ENCODE measurements at regions of chr16 and their contacts with region 1.

Region 1: GRCh38 chr16:51762081-51762996 is 611.3 kb upstream of the SALL1 start:
- DNase-seq: peak; percentile 70
- ATAC-seq: peak; percentile 97
- H3K4me3 ChIP-seq: no peak overlapping the region
- H3K27ac ChIP-seq: no peak overlapping the region
- H3K4me1 ChIP-seq: no peaks in the 10 kb centered on the region; the same call in 1 of the 2 replicates
- H3K27me3 ChIP-seq: no peaks in the 10 kb centered on the region
- CTCF ChIP-seq: peak; percentile 90
- POLR2A ChIP-seq: no peak
- RAD21 ChIP-seq: peak; percentile 93

Region 2: GRCh38 chr16:51146256-51146924 is 615.9 kb before region 1 on chr16:
- CTCF ChIA-PET with region 1: interaction called, 3 read pairs
- POLR2A ChIA-PET with region 1: no interaction called
- dilution Hi-C with region 1: no loop called
- in situ Hi-C with region 1: loop called (anchors 5 kb)
- intact Hi-C with region 1: loop called (anchors 1 kb)
- DNase-seq: peak; percentile 75
- ATAC-seq: 0 out of 2 replicates have a peak, but pooled peaks have one; percentile 16
- H3K4me3 ChIP-seq: peak overlapping the region; percentile 34; the same call in 1 of the 2 replicates
- H3K27ac ChIP-seq: no peak overlapping the region
- H3K4me1 ChIP-seq: no peaks in the 10 kb centered on the region
- H3K27me3 ChIP-seq: no peaks in the 10 kb centered on the region
- CTCF ChIP-seq: peak; percentile 73
- POLR2A ChIP-seq: no peak
- RAD21 ChIP-seq: peak; percentile 75

Region 3: DNA sequence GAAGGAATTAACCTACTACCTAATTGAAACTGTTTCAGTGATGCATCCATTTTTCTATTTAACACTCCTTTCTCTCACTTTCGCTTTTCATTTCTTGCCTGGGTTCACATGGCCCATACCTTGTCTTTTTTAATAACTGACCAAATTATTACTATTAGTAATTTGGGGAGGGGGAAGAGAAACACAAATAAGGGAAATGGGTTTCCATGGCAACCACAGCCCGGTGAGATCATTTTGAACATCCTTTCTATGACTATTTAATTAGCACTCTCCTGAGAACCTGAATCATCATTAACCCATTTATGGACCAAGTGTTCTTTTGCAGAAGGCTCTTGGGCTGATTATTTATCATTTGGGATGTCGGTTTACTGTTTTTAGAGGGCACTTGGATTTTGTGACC is 16.9 kb after region 1 on chr16:
- CTCF ChIA-PET with region 1: no interaction called
- POLR2A ChIA-PET with region 1: no interaction called
- dilution Hi-C with region 1: no loop called
- in situ Hi-C with region 1: no loop called
- intact Hi-C with region 1: no loop called
- DNase-seq: no peak
- ATAC-seq: no peak
- H3K4me3 ChIP-seq: no peak overlapping the region
- H3K27ac ChIP-seq: no peak overlapping the region
- H3K4me1 ChIP-seq: no peaks in the 10 kb centered on the region
- H3K27me3 ChIP-seq: no peaks in the 10 kb centered on the region
- CTCF ChIP-seq: no peak
- POLR2A ChIP-seq: no peak
- RAD21 ChIP-seq: no peak